Tibial artery (tissue), 4 donors: ENCODE measurements at regions of chr1 and their contacts with region 1.

Region 1: DNA sequence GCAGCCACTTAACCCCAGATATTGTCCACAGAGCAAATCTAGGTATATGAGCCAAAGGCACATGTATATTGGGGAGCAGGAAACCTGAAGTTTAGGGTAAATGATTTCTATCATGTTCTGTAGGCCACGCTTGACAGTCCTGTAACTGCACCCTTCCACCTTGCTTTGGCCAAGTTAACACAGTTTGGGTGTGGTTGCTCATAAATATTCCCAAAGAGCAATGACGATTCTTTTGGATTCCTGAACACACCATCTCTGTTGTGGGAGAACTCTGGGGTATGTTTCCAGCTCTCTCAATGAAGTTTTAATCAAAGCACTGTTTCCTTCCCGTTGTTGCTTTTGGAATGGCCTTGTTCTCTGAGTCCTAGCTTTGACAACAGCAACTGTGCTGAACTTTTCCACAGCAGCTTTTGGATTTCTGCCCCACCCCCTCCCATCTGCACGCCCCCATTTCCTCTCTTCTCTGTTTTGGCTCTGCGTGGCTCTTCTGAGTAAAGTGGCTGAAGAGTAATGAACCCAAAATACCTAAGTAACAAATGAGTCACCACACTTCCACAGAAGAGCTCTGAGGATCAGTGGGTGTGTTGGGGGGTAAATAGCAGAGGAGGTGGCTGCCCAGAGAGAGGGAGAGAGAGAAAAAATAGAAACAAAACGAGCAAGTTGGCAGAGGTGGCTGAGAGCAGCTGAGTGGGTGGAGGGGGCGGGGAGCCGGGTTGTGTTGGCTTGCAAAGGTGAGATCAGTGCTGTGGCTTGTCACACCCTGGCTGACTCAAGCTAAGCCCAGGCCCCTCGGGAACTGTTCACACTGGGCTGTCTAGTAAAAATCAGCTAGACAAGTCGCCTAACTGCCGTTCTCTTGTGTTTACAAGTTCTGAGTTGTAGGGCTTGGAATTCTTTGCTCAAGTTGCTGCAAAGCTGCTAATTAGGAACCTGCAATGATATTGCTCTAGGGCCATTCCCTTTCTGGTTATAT is 26.9 kb upstream of the RAP1A start:
- DNase-seq: peak; percentile 89 to 97
- H3K4me3 ChIP-seq: no peak overlapping the region
- H3K27ac ChIP-seq: peak overlapping the region; percentile 77 to 78
- H3K4me1 ChIP-seq: peaks cover 7 to 40% (median 23%) of the 10 kb centered on the region in 4 donors
- H3K27me3 ChIP-seq: no peaks in the 10 kb centered on the region
- CTCF ChIP-seq: no peak

Region 2: GRCh38 chr1:111538343-111539025 is 54.2 kb before region 1 on chr1:
- intact Hi-C with region 1: loop called (anchors 10 kb)
- DNase-seq: no peak
- H3K4me3 ChIP-seq: no peak overlapping the region
- H3K27ac ChIP-seq: peak overlapping the region; percentile 71 to 87
- H3K4me1 ChIP-seq: peaks cover 0 to 45% (median 13%) of the 10 kb centered on the region in 4 donors
- H3K27me3 ChIP-seq: no peaks in the 10 kb centered on the region
- CTCF ChIP-seq: no peak

Region 3: GRCh38 chr1:111758373-111758772 is 165.7 kb after region 1 on chr1:
- intact Hi-C with region 1: no loop called
- DNase-seq: no peak
- H3K4me3 ChIP-seq: no peak overlapping the region
- H3K27ac ChIP-seq: no peak overlapping the region
- H3K4me1 ChIP-seq: peaks cover 0 to 22% (median 17%) of the 10 kb centered on the region in 4 donors
- H3K27me3 ChIP-seq: no peaks in the 10 kb centered on the region
- CTCF ChIP-seq: no peak

Region 4: DNA sequence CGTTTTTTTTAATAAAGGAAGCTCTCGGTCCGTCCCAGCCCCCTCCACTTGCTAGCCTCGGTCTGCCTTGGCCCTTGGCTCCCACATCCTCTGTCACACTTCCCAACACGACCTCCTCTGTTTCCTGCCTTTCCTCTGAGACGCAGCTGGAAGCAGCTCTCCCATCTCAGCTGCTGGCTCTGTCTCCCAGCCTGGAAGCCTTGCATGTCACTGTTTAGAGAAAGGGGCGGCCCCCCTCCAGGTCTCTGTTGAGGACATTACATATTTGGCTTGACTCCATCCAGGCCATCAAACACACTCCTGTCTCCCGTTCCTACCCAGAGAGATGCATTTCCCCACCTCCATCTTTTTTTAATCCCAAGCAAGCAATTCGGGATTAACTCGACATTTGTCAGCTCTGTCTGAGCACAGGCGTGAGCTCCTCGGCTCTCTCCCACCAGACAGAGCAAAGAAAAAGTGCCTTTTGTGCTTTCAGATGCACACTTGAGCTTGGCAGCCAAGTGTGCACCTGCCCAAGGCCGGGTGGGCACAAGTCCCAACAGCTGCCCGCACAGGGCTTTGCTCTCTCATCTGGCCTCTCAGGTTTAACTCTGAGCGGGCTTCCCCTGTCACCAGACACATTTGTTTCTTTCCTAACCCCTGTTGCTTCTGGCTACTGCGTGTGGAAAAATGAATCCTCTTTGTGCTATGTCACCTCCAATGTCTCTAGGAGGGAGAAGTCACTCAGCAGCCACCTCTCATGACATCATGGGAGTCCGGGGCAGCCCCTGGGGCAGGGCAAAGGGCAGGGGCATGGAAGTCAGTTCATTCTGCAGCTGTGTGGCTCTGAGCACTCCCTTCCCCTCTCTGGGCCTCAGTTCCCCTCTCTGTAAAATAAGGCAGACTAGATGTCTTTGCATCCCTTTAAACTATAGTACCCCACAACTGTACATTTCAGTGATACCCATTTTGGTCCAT is 288.5 kb after region 1 on chr1:
- intact Hi-C with region 1: no loop called
- DNase-seq: no peak
- H3K4me3 ChIP-seq: no peak overlapping the region
- H3K27ac ChIP-seq: no peak overlapping the region
- H3K4me1 ChIP-seq: peaks cover 0 to 21% (median 7%) of the 10 kb centered on the region in 4 donors
- H3K27me3 ChIP-seq: peaks cover 0 to 2% of the 10 kb centered on the region in 2 donors
- CTCF ChIP-seq: no peak